Caco-2 (cell line): ENCODE measurements at regions of chr9 and their contacts with region 1.

Region 1: GRCh38 chr9:4137234-4137633 is 162.6 kb downstream of the GLIS3 start:
- DNase-seq: peak; percentile 41 to 46
- H3K4me3 ChIP-seq: no peak overlapping the region
- H3K4me3 Mint-ChIP-seq: no peak overlapping the region
- H3K27ac Mint-ChIP-seq: peak overlapping the region; percentile 97
- H3K4me1 ChIP-seq: peaks cover 54% of the 10 kb centered on the region
- H3K4me1 Mint-ChIP-seq: peaks cover 22% of the 10 kb centered on the region
- H3K27me3 ChIP-seq: no peaks in the 10 kb centered on the region
- H3K27me3 Mint-ChIP-seq: no peaks in the 10 kb centered on the region
- CTCF ChIP-seq: no peak

Region 2: DNA sequence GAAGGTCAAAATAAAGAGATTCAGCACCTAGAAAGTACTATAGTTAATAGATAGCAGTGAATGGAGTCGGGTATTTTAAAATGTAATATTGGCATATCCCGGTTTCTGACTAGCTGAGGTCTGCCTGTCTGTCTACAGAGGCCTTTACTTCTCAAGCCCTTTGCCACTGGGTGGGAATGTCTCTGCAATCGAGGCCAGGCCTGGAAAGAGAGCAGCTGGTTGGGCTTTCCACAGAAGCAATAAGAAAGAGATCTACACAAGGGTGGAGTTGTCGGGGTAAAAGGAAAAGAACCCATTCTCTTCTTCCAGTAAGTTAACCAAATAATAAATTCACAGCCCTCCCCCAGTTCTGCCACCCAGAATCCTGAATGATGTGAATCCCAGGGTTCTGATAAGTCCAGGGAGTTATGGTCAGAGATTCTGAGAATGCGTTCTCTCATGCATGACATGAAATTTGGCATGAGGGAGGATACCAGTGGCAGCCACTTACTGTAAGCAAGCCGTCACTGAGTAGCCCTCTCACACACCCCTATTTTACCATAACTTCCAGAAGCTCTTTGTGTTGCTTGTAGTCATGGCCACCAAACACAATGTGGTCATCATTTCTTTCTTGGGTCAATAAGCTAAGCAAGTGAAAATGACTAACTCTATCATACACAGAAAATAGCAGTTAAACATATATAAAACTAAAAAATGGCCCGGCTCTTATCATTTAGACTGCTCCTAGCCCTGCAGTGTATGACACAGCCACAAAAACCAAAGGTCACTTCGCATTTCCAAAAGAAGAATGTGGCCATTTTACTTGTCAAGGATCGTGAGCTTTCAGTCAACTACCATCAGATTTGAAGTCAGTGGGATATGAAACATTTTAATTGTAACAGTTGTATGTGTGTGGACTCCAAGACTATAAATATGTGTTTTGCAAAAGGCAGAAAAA is 22.4 kb before region 1 on chr9:
- CTCF ChIA-PET with region 1: no interaction called
- POLR2A ChIA-PET with region 1: no interaction called
- intact Hi-C with region 1: no loop called
- DNase-seq: no peak
- H3K4me3 ChIP-seq: no peak overlapping the region
- H3K4me3 Mint-ChIP-seq: no peak overlapping the region
- H3K27ac Mint-ChIP-seq: peak overlapping the region; percentile 42
- H3K4me1 ChIP-seq: peaks cover 21% of the 10 kb centered on the region
- H3K4me1 Mint-ChIP-seq: peaks cover 6% of the 10 kb centered on the region
- H3K27me3 ChIP-seq: no peaks in the 10 kb centered on the region
- H3K27me3 Mint-ChIP-seq: no peaks in the 10 kb centered on the region
- CTCF ChIP-seq: no peak

Region 3: DNA sequence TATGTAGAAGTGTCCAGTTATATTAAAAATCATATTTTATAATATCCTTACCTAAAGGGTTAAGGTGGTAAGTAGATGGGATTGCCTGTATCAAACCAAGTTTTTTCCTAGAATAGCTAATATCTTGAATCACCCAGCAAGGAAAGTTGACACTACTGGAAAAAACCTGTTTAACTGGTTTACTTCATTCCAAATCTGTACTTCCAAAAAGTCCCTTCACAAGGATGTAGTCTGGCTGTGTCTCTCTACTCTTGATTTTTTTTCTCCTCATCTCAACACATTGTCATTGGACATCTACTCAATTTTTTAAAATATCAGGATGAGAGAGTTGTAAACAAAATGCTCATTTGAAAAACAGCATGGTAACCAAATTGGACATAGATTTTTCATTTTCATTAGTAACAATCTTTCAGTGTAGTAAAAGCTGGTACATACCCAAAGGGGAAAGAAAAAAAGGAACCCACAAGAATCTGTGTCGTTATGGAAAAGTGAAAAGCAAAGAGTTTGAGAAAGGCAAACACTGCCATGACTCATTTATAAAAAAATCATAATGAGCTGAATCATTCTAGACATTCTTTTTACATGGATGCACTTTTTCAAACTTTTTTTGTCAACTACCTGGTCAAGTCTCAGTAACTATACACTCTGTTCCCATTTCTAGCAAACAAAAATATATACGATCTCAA is 10.9 kb before region 1 on chr9:
- CTCF ChIA-PET with region 1: no interaction called
- POLR2A ChIA-PET with region 1: no interaction called
- intact Hi-C with region 1: loop called (anchors 1 kb)
- DNase-seq: no peak
- H3K4me3 ChIP-seq: no peak overlapping the region
- H3K4me3 Mint-ChIP-seq: no peak overlapping the region
- H3K27ac Mint-ChIP-seq: no peak overlapping the region
- H3K4me1 ChIP-seq: peaks cover 13% of the 10 kb centered on the region
- H3K4me1 Mint-ChIP-seq: peaks cover 18% of the 10 kb centered on the region
- H3K27me3 ChIP-seq: no peaks in the 10 kb centered on the region
- H3K27me3 Mint-ChIP-seq: no peaks in the 10 kb centered on the region
- CTCF ChIP-seq: no peak